Dorsolateral prefrontal cortex (tissue), 120 donors: ENCODE measurements at regions of chr5 and their contacts with region 1.

Region 1: GRCh38 chr5:178279725-178280438 is 47.3 kb upstream of the PHYKPL start:
- DNase-seq: peak; percentile 87 to 95 (median 94)
- H3K4me3 ChIP-seq: peak overlapping the region in 32 of 59 donors; percentile 2 to 51 (median 26)
- H3K27ac ChIP-seq: peak overlapping the region in 5 of 59 donors; percentile 4 to 48 (median 37)
- H3K27me3 ChIP-seq: peaks cover 0 to 5% (median 0%) of the 10 kb centered on the region in 45 donors
- CTCF ChIP-seq: peak; percentile 66 to 99 (median 96)

Region 2: DNA sequence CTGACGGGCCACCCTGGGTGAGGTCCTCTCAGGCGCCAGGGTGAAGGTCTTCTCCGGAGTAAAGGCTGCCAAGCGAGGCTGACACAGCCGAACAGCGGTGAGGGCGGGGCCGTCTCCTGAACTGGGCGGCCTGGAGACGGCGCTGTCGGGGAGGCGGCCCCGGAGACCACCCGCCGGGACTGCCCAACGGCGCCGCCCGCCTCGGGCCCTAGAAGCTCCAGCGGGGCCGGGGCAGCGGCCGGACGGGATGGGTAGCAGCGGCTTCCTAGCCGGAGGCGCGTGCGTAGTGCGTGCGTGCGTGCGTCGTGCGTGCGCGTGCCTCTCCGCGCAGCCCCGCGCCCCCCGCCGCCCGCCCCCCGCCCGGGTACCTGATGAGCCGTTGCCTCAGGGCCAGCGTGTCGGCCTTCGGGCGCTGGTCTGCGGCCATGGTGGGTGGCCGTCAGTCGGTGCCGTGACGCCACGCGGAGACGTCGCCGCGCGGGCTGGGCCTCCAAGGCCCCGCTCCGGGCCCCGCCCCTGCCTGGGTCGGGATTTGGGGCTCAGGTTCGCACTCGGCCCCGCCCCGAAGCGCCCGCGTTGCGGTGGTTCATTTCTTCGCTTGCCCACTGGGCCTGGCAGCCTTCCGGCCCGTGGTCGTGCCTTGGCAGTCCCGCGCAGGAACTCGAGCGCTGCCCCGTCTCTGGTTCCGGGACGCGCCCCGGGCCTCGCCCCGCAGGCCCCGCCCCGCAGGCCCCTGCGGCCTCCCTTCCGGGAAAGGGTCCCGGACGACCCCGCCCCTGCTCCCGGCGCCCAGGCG is 47.6 kb before region 1 on chr5 and contains the start of gene PHYKPL:
- intact Hi-C with region 1: loop called in 1 of 2 experiments (anchors 5 kb)
- DNase-seq: peak; percentile 42 to 81 (median 62)
- H3K4me3 ChIP-seq: peak within 1 kb of the TSS; percentile 44 to 97 (median 90)
- H3K27ac ChIP-seq: peak within 1 kb of the TSS; percentile 58 to 99 (median 96)
- H3K27me3 ChIP-seq: no peaks in the 10 kb centered on the region
- CTCF ChIP-seq: peak in 25 of 56 donors; percentile 6 to 44 (median 20)
- total RNA-seq, gene PHYKPL: 36.8 to 114 (median 63.2) TPM

Region 3: GRCh38 chr5:178346607-178347334 is 66.9 kb after region 1 on chr5:
- intact Hi-C with region 1: loop called in 1 of 2 experiments (anchors 5 kb)
- DNase-seq: peak in 7 of 10 donors; percentile 47 to 79 (median 58)
- H3K4me3 ChIP-seq: peak overlapping the region in 1 of 59 donors; percentile 2
- H3K27ac ChIP-seq: peak overlapping the region; percentile 5 to 99 (median 93)
- H3K27me3 ChIP-seq: peaks cover 0 to 3% (median 0%) of the 10 kb centered on the region in 45 donors
- CTCF ChIP-seq: peak in 5 of 56 donors; percentile 7 to 20 (median 9)

Region 4: GRCh38 chr5:178461004-178461730 is 181.3 kb after region 1 on chr5:
- intact Hi-C with region 1: loop called (anchors 5 to 10 kb)
- DNase-seq: peak; percentile 69 to 83 (median 80)
- H3K4me3 ChIP-seq: no peak overlapping the region
- H3K27ac ChIP-seq: no peak overlapping the region
- H3K27me3 ChIP-seq: no peaks in the 10 kb centered on the region
- CTCF ChIP-seq: peak in 55 of 56 donors; percentile 55 to 86 (median 76)

Region 5: DNA sequence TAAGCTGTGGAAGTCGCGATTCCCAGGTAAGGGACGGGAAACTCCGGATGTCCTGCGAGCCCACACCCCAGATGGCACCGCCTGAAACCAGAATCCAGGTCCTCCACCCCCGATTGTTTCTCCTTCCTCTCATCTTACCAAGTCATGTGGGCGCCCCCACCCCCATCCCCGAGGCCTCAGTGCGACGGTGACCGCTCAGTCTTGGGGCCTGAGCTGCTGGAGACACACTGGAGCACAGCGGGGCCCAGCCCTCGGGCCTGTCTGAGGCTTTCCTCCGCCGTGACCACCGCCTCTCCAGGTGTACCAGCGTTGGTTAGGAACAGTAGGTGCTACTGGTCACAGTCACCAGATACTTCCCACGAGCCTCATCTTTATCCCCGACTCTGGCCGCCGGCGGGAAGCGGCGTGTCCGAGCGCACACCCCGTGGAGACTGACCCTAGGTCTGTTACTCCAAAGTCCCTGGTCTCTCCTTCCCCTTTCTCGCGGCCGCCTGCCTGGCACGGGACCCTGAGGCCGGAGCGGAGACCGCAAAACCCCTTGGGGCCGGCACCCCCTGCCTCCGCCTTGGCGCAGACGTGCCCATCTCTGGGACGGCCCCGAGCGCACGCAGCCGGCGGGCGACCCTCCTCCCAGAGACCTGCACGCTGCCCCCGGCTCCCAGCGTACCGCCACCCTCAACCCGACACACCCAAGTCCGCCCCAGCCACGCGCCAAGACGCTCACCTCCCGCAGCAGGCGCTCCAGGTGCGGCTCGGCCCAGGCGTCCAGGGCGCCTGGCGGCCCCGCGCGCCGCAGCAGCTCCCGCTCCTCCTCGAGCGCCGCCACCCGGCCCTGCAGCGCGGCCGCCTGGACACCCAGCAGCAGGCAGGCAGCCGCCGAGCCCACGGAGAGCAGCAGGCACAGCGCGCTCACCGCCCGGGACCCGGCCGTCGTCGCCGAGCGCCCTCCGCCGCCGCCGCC is 309.6 kb after region 1 on chr5:
- intact Hi-C with region 1: loop called (anchors 1 to 5 kb)
- DNase-seq: peak in 2 of 10 donors; percentile 17 to 60
- H3K4me3 ChIP-seq: peak overlapping the region; percentile 11 to 71 (median 51)
- H3K27ac ChIP-seq: no peak overlapping the region
- H3K27me3 ChIP-seq: peaks cover 0 to 13% (median 0%) of the 10 kb centered on the region in 45 donors
- CTCF ChIP-seq: peak in 6 of 56 donors; percentile 8 to 27 (median 16)